Vagina (tissue), 2 donors: ENCODE measurements at regions of chr12 and their contacts with region 1.

Region 1: DNA sequence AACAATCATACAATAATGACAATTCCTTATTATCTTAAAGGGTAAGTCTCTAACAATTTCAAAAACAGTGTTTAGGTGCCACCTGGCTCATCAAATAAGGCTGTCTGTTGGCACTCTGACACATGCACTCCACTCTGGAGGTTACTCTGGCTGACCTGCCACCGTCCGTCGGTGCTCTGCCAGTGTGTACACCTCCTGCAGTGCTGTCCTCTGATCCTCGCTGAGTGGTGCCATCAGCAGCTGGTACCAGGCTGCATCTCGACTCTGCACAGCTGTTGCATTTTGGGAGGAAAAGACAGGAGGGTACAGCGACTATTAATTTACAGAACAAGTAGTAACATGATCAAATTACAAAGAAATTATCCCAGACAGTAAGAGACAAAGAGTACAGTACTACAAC is 63.9 kb downstream of the IPO8 start:
- DNase-seq: no peak
- H3K4me3 ChIP-seq: no peak overlapping the region
- H3K27ac ChIP-seq: no peak overlapping the region
- H3K4me1 ChIP-seq: no peaks in the 10 kb centered on the region
- H3K27me3 ChIP-seq: no peaks in the 10 kb centered on the region
- CTCF ChIP-seq: no peak
- POLR2A ChIP-seq: no peak

Region 2: DNA sequence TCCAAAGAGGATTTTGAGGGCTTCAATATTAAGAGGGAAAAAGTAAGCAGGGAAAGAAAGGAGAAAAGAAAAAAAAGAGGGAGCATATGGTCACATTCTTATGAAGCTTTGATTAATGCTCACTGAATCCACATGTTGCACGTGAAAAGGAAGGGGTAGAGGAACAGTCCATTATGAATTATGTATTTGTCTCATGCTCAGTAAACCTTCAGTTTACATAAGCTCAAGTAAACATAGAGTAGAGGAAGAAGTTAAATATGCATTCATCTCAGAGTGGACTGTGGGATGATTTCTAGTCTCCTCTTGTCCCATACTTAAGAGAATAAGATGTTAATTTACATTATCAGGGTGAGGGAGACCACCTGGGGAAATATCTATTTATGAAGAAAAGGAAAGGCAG is 270.6 kb before region 1 on chr12:
- intact Hi-C with region 1: no loop called
- DNase-seq: no peak
- H3K4me3 ChIP-seq: no peak overlapping the region
- H3K27ac ChIP-seq: no peak overlapping the region
- H3K4me1 ChIP-seq: no peaks in the 10 kb centered on the region
- H3K27me3 ChIP-seq: no peaks in the 10 kb centered on the region
- CTCF ChIP-seq: no peak
- POLR2A ChIP-seq: no peak

Region 3: DNA sequence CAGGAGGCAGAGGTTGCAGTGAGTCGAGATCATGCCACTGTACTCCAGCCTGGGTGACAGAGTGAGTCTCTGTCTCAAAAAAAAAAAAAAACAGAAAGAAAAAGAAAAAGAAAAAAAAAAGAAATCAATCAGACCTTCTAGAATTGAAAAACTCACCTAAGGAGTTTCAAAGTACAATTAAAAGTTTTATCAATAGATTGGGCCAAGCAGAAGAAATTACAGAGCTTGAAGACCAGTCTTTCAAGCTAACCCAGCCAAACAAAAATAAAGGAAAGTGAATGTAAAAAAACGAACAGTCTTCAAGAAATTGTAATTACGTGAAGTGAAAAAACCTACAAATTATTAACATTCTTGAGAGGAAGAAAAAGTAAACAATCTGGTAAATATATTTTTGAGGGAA is 29.1 kb before region 1 on chr12:
- intact Hi-C with region 1: loop called (anchors 2 kb)
- DNase-seq: no peak
- H3K4me3 ChIP-seq: no peak overlapping the region
- H3K27ac ChIP-seq: no peak overlapping the region
- H3K4me1 ChIP-seq: no peaks in the 10 kb centered on the region
- H3K27me3 ChIP-seq: no peaks in the 10 kb centered on the region
- CTCF ChIP-seq: no peak
- POLR2A ChIP-seq: no peak